ENCODE measurements at regions of chr1 and their contacts with region 1.

Region 1: GRCh38 chr1:101250656-101251272 is 13.9 kb downstream of the S1PR1 start:
- DNase-seq: no peak
- H3K27ac ChIP-seq: no peak overlapping the region
- CTCF ChIP-seq: no peak

Region 2: GRCh38 chr1:101238681-101239094 is 12.1 kb before region 1 on chr1:
- CTCF ChIA-PET with region 1: interaction called, 10 read pairs
- POLR2A ChIA-PET with region 1: no interaction called
- DNase-seq: peak; percentile 84
- H3K27ac ChIP-seq: no peak overlapping the region
- CTCF ChIP-seq: peak; percentile 94

Measured in RWPE1 (cell line).